B cell (primary cell): ENCODE measurements at regions of chr22 and their contacts with region 1.

Region 1: GRCh38 chr22:41448189-41448808 is 1.7 kb upstream of the TOB2 start:
- DNase-seq: peak; percentile 96
- ATAC-seq: peak; percentile 60
- H3K4me3 ChIP-seq: peak overlapping the region; percentile 90 to 99 (median 97)
- H3K4me3 Mint-ChIP-seq: peak overlapping the region; percentile 99
- H3K27ac ChIP-seq: peak overlapping the region; percentile 97 to 98
- H3K27ac Mint-ChIP-seq: peak overlapping the region; percentile 94
- H3K4me1 ChIP-seq: peaks cover 8 to 25% of the 10 kb centered on the region in 2 donors
- H3K4me1 Mint-ChIP-seq: peaks cover 28% of the 10 kb centered on the region
- H3K27me3 ChIP-seq: no peaks in the 10 kb centered on the region
- H3K27me3 Mint-ChIP-seq: no peaks in the 10 kb centered on the region
- CTCF ChIP-seq: no peak

Region 2: GRCh38 chr22:40856513-40857308 is 591.6 kb before region 1 on chr22 and contains the starts of genes ST13 and XPNPEP3:
- CTCF ChIA-PET with region 1: no interaction called
- POLR2A ChIA-PET with region 1: interaction called, 4 read pairs
- intact Hi-C with region 1: loop called (anchors 10 kb)
- DNase-seq: peak; percentile 98
- ATAC-seq: peak; percentile 88
- H3K4me3 ChIP-seq: peak within 1 kb of the TSS; percentile 82 to 98 (median 94)
- H3K4me3 Mint-ChIP-seq: peak within 1 kb of the TSS; percentile 97
- H3K27ac ChIP-seq: peak within 1 kb of the TSS; percentile 91 to 94
- H3K27ac Mint-ChIP-seq: peak within 1 kb of the TSS; percentile 100
- H3K4me1 ChIP-seq: peaks cover 24 to 28% of the 10 kb centered on the region in 2 donors
- H3K4me1 Mint-ChIP-seq: peaks cover 46% of the 10 kb centered on the region
- H3K27me3 ChIP-seq: no peaks in the 10 kb centered on the region
- H3K27me3 Mint-ChIP-seq: no peaks in the 10 kb centered on the region
- CTCF ChIP-seq: peak; percentile 71
- total RNA-seq, gene ST13: 175 and 187 TPM in 2 replicates
- total RNA-seq, gene XPNPEP3: 18.9 and 24.2 TPM in 2 replicates

Region 3: DNA sequence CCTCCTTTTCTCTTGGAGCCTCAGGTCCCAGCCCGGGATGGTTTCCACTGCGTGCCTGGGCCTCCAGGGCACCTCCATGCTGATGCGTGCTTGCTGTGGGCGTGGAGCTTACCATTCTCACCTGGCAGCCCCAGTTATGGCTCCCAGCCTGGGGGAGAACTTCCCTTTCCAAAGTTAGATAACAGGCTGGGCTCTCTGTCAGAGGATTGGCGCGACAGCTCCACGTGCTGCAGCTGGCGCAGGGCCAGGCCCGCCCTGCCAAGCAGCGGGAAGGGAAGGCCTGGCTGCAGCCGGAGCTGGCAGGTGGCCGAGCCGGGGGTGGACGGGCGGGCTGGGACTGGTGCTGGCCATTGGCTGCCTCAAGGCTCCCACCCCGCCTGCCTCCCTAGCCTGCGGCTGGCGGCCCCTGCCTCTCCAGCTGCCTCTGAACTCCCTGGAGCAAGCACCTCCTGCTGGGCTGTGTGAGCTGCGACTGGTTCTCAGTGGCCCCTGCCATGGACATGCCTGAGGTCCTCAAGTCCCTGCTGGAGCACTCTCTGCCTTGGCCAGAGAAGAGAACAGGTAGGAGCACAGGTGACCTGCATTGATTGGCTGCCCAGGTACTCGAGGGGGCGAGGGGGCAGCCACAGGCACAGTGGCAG is 81.1 kb before region 1 on chr22:
- CTCF ChIA-PET with region 1: no interaction called
- POLR2A ChIA-PET with region 1: no interaction called
- intact Hi-C with region 1: no loop called
- DNase-seq: no peak
- ATAC-seq: no peak
- H3K4me3 ChIP-seq: no peak overlapping the region
- H3K4me3 Mint-ChIP-seq: no peak overlapping the region
- H3K27ac ChIP-seq: no peak overlapping the region
- H3K27ac Mint-ChIP-seq: no peak overlapping the region
- H3K4me1 ChIP-seq: no peaks in the 10 kb centered on the region
- H3K4me1 Mint-ChIP-seq: no peaks in the 10 kb centered on the region
- H3K27me3 ChIP-seq: peaks cover 0 to 11% (median 0%) of the 10 kb centered on the region in 4 experiments
- H3K27me3 Mint-ChIP-seq: peaks cover 4% of the 10 kb centered on the region
- CTCF ChIP-seq: no peak

Region 4: GRCh38 chr22:41403532-41404318 is 44.6 kb before region 1 on chr22:
- CTCF ChIA-PET with region 1: interaction called, 40 read pairs
- POLR2A ChIA-PET with region 1: interaction called, 39 read pairs
- intact Hi-C with region 1: loop called (anchors 2 kb)
- DNase-seq: peak; percentile 89
- ATAC-seq: peak; percentile 87
- H3K4me3 ChIP-seq: no peak overlapping the region
- H3K4me3 Mint-ChIP-seq: no peak overlapping the region
- H3K27ac ChIP-seq: no peak overlapping the region
- H3K27ac Mint-ChIP-seq: peak overlapping the region; percentile 15
- H3K4me1 ChIP-seq: peaks cover 8 to 30% of the 10 kb centered on the region in 2 donors
- H3K4me1 Mint-ChIP-seq: peaks cover 31% of the 10 kb centered on the region
- H3K27me3 ChIP-seq: no peaks in the 10 kb centered on the region
- H3K27me3 Mint-ChIP-seq: no peaks in the 10 kb centered on the region
- CTCF ChIP-seq: peak; percentile 94

Region 5: DNA sequence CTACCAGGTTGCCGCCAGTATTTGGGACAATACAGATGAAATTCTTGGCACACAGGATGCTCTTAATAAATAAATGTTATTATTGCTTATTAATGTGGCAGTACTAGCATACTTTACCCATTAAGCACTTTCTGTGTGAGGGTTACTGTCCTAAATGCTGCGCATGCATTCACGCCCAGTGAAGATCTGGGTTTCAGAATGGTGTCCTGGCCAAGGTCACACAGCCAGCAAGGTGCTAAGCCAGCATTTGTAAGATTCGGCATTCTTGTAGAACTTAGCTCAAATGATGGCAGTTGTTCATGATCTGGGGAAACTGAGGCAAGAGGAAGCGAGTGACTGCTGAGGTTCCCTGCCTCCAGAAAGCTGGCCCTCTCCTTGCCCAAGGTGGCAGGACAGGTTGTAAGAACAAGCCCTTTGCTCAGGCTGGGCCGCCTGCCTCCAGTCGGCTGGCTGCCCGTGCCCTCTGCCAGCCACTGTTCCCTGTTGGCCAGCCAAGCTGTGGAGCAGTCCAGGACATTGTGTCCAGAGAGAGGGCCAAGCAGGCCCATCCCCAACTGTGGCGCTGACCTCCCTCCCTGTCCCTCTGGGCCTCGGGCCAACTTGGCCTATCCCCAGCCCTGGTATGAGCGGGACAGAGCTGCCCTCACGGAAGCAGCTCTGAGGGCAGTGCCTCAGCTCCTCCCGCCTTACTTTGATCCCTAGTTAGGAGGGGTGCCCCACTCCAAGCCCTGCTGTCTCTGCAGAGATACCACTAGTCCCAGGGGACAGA is 30.5 kb before region 1 on chr22:
- CTCF ChIA-PET with region 1: no interaction called
- POLR2A ChIA-PET with region 1: interaction called, 41 read pairs
- intact Hi-C with region 1: no loop called
- DNase-seq: no peak
- ATAC-seq: no peak
- H3K4me3 ChIP-seq: no peak overlapping the region
- H3K4me3 Mint-ChIP-seq: no peak overlapping the region
- H3K27ac ChIP-seq: no peak overlapping the region
- H3K27ac Mint-ChIP-seq: no peak overlapping the region
- H3K4me1 ChIP-seq: peaks cover 27 to 46% of the 10 kb centered on the region in 2 donors
- H3K4me1 Mint-ChIP-seq: peaks cover 42% of the 10 kb centered on the region
- H3K27me3 ChIP-seq: no peaks in the 10 kb centered on the region
- H3K27me3 Mint-ChIP-seq: no peaks in the 10 kb centered on the region
- CTCF ChIP-seq: no peak

Region 6: DNA sequence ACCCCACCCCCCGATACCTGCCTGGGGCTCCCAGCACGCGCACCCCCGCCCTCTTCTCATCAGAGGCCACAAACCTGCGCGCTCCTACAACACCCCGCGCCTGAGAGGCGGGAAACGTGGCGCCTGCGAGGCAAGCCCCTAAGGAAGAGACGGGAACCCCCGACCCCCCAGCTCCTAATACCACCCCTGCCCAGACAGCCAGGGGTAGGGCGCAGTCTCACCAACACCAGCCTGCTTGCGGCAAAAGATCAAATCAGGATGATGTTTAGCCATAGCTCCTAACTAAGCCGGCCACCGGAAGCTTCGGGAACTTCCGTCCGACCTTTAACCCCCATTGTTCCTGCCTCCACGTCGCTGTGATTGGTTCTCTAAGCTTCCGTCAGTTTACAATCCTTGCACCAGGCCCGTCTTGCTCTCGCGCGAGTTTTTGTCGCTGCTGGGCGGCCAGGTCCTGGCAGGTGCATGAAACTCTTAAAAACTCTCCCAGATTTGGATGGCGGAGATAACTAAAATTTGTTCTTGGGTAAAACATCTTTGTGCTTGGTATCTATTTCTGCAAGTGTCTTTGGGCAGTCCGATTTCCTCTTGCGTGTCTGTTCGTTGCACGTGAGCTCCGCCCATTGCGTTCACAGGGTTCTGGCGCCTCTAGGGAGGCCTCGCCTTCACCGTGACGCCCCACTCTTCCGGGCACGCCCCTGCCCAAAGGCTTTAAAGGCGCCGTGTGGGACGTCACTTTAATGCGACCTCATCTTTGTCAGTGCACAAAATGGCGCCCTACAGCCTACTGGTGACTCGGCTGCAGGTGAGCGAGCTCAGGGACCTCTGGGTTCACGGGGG is 20.3 kb after region 1 on chr22 and contains the starts of genes ACO2 and PHF5A:
- CTCF ChIA-PET with region 1: interaction called, 41 read pairs
- POLR2A ChIA-PET with region 1: interaction called, 88 read pairs
- intact Hi-C with region 1: loop called (anchors 1 kb)
- DNase-seq: peak; percentile 99
- ATAC-seq: peak; percentile 91
- H3K4me3 ChIP-seq: peak within 1 kb of the TSS; percentile 71 to 98 (median 86)
- H3K4me3 Mint-ChIP-seq: peak within 1 kb of the TSS; percentile 89
- H3K27ac ChIP-seq: peak within 1 kb of the TSS; percentile 99
- H3K27ac Mint-ChIP-seq: peak within 1 kb of the TSS; percentile 98
- H3K4me1 ChIP-seq: peaks cover 20 to 31% of the 10 kb centered on the region in 2 donors
- H3K4me1 Mint-ChIP-seq: peaks cover 59% of the 10 kb centered on the region
- H3K27me3 ChIP-seq: no peaks in the 10 kb centered on the region
- H3K27me3 Mint-ChIP-seq: no peaks in the 10 kb centered on the region
- CTCF ChIP-seq: no peak
- total RNA-seq, gene ACO2: 91.7 and 104 TPM in 2 replicates
- total RNA-seq, gene PHF5A: 31.6 and 34.5 TPM in 2 replicates

Region 7: DNA sequence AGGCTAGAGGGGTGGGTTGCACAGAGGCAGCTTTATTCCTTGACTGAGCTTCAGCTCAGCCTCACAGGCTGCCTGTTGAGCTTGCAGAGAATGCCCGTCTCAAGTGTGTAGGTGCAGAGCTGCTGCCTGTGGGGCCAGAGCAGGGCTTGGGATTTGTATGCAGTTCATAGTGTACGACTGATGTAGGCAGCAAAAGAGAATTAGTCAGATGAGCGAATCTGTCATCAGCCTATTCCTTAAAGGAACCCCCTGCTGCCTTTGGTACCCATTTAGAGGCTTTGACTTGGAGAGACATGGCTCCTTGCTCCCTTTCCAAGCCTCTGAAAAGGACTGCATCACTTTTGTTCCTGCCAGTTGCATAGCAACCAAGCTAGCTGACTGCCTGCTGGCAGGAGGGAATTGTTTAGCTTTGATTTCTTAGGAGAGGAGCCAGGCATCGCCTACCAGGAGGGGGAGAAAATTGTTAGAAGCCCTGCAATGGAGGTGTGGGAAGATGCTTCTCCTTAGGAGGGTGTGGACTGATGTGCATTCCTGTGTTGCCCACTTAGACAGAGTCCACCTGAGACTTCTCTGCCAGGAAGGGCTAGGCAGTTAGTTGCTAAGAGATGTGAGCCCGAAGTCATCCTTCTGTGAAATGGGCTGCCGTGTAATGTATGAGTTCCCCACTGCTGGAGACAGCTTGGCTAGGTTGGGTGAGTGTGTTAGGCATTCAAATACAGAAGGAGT is 31.5 kb after region 1 on chr22:
- CTCF ChIA-PET with region 1: interaction called, 7 read pairs
- POLR2A ChIA-PET with region 1: interaction called, 60 read pairs
- intact Hi-C with region 1: loop called (anchors 1 kb)
- DNase-seq: no peak
- ATAC-seq: no peak
- H3K4me3 ChIP-seq: peak overlapping the region in 4 of 5 experiments; percentile 0 to 25 (median 12)
- H3K4me3 Mint-ChIP-seq: peak overlapping the region; percentile 76
- H3K27ac ChIP-seq: peak overlapping the region; percentile 82 to 86
- H3K27ac Mint-ChIP-seq: peak overlapping the region; percentile 95
- H3K4me1 ChIP-seq: peaks cover 84 to 95% of the 10 kb centered on the region in 2 donors
- H3K4me1 Mint-ChIP-seq: peaks cover 77% of the 10 kb centered on the region
- H3K27me3 ChIP-seq: no peaks in the 10 kb centered on the region
- H3K27me3 Mint-ChIP-seq: no peaks in the 10 kb centered on the region
- CTCF ChIP-seq: no peak

Region 8: GRCh38 chr22:41621099-41621910 is 173.0 kb after region 1 on chr22 and contains the start of gene XRCC6:
- CTCF ChIA-PET with region 1: no interaction called
- POLR2A ChIA-PET with region 1: interaction called, 11 read pairs
- intact Hi-C with region 1: loop called (anchors 10 kb)
- DNase-seq: peak; percentile 100
- ATAC-seq: peak; percentile 96
- H3K4me3 ChIP-seq: peak within 1 kb of the TSS; percentile 68 to 97 (median 89)
- H3K4me3 Mint-ChIP-seq: peak within 1 kb of the TSS; percentile 96
- H3K27ac ChIP-seq: peak within 1 kb of the TSS; percentile 95 to 96
- H3K27ac Mint-ChIP-seq: peak within 1 kb of the TSS; percentile 94
- H3K4me1 ChIP-seq: peaks cover 19 to 27% of the 10 kb centered on the region in 2 donors
- H3K4me1 Mint-ChIP-seq: peaks cover 39% of the 10 kb centered on the region
- H3K27me3 ChIP-seq: no peaks in the 10 kb centered on the region
- H3K27me3 Mint-ChIP-seq: no peaks in the 10 kb centered on the region
- CTCF ChIP-seq: no peak
- total RNA-seq, gene XRCC6: 176 and 180 TPM in 2 replicates